ENCODE measurements at regions of chr1 and their contacts with region 1.

Region 1: GRCh38 chr1:28540651-28541050 is 12.2 kb upstream of the TRNAU1AP start:
- DNase-seq: no peak
- ATAC-seq: no peak
- H3K4me3 ChIP-seq: no peak overlapping the region
- H3K27ac ChIP-seq: no peak overlapping the region
- H3K4me1 ChIP-seq: no peaks in the 10 kb centered on the region
- H3K27me3 ChIP-seq: no peaks in the 10 kb centered on the region
- CTCF ChIP-seq: no peak

Region 2: GRCh38 chr1:28235755-28236655 is 304.6 kb before region 1 on chr1 and contains the start of gene ATP5IF1:
- CTCF ChIA-PET with region 1: no interaction called
- POLR2A ChIA-PET with region 1: no interaction called
- in situ Hi-C with region 1: no loop called
- intact Hi-C with region 1: no loop called
- DNase-seq: peak; percentile 96
- ATAC-seq: peak; percentile 95
- H3K4me3 ChIP-seq: peak within 1 kb of the TSS; percentile 92 to 94
- H3K27ac ChIP-seq: peak within 1 kb of the TSS; percentile 91
- H3K4me1 ChIP-seq: peaks cover 8% of the 10 kb centered on the region
- H3K27me3 ChIP-seq: no peaks in the 10 kb centered on the region
- CTCF ChIP-seq: no peak
- total RNA-seq, gene ATP5IF1: 94.5 TPM

Region 3: GRCh38 chr1:28417429-28417922 is 123.2 kb before region 1 on chr1:
- CTCF ChIA-PET with region 1: no interaction called
- POLR2A ChIA-PET with region 1: no interaction called
- in situ Hi-C with region 1: no loop called
- intact Hi-C with region 1: no loop called
- DNase-seq: peak; percentile 85
- ATAC-seq: peak; percentile 79
- H3K4me3 ChIP-seq: no peak overlapping the region
- H3K27ac ChIP-seq: peak overlapping the region; percentile 29; the same call in 1 of the 2 replicates
- H3K4me1 ChIP-seq: peaks cover 8% of the 10 kb centered on the region; the same call in 1 of the 2 replicates
- H3K27me3 ChIP-seq: no peaks in the 10 kb centered on the region
- CTCF ChIP-seq: no peak

Region 4: GRCh38 chr1:28552758-28553663 is 12.4 kb after region 1 on chr1 and contains the start of gene TRNAU1AP:
- CTCF ChIA-PET with region 1: no interaction called
- POLR2A ChIA-PET with region 1: interaction called, 17 read pairs
- in situ Hi-C with region 1: no loop called
- intact Hi-C with region 1: no loop called
- DNase-seq: peak; percentile 88
- ATAC-seq: peak; percentile 98
- H3K4me3 ChIP-seq: peak within 1 kb of the TSS; percentile 90 to 98
- H3K27ac ChIP-seq: peak within 1 kb of the TSS; percentile 97
- H3K4me1 ChIP-seq: no peaks in the 10 kb centered on the region
- H3K27me3 ChIP-seq: no peaks in the 10 kb centered on the region
- CTCF ChIP-seq: no peak
- total RNA-seq, gene TRNAU1AP: 39.1 TPM